ENCODE measurements at regions of chr1 and their contacts with region 1.

Region 1: DNA sequence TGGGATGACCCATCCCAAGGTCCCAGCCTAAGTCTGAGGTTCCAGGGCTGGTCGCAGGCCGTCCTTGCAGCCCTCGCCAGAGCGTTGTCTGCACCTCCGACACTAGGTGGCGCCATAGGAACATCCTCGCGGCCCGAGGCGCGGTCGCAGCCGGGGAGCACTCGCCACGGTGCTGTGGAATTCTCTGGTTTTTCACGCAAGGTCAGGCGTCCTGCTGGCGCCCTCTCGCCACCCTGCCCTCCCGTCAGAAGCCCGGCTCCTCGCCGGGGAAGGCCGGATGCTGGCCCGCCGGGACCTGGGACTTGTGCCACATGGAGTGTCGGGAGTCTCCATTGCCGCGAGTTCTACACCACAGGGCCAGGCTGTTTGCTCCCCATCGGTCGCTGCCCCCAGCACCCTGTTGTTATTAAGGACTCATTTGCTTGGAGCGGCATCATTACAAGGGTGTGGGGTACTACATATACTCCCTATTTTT is 196.8 kb upstream of the LMO4 start:
- DNase-seq: peak; percentile 83 to 88 (median 86)
- ATAC-seq: peak; percentile 98
- H3K4me3 ChIP-seq: peak overlapping the region; percentile 27
- H3K27ac ChIP-seq: no peak overlapping the region
- H3K4me1 ChIP-seq: peaks cover 13 to 14% of the 10 kb centered on the region in 2 experiments
- H3K27me3 ChIP-seq: peaks cover 9 to 40% of the 10 kb centered on the region in 2 experiments; a peak in 3 of 5 replicates
- CTCF ChIP-seq: peak; percentile 86 to 91 (median 88)
- EP300 ChIP-seq: no peak
- POLR2A ChIP-seq: no peak
- RAD21 ChIP-seq: peak; percentile 82 to 90

Region 2: DNA sequence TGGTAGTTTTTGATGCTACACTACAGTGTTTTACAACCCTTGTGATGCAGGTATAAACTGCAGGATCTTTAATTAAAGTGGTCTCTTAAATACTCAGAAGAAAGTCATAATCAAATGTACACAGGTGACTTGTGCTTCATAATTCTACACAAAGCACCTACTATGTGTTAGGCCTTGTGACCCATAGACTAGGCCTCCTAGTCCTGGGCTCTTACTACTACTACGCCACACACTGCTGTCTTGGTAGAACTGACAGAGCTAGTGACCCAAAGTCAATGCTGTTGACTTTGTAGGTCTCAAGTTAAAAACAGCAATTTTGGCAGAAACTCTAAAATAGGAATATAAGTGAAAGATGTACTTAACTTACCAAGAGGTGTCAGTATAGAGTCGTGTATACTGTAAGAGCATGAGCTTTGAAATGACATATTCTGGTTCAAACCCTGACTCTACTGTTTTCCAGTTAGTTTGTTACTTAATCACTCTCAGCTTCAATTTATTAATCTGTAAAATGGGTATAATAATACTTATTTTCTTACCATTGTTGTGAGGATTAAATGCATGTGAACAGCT is 148.2 kb after region 1 on chr1:
- CTCF ChIA-PET with region 1: no interaction called
- POLR2A ChIA-PET with region 1: no interaction called
- in situ Hi-C with region 1: loop called (anchors 10 kb)
- intact Hi-C with region 1: loop called (anchors 5 kb)
- DNase-seq: peak in 1 of 4 experiments; percentile 14
- ATAC-seq: peak; percentile 49; the same call in 2 of the 3 replicates
- H3K4me3 ChIP-seq: no peak overlapping the region
- H3K27ac ChIP-seq: no peak overlapping the region
- H3K4me1 ChIP-seq: peaks cover 0 to 2% of the 10 kb centered on the region in 2 experiments; a peak in 2 of 5 replicates
- H3K27me3 ChIP-seq: peaks cover 0 to 8% of the 10 kb centered on the region in 2 experiments; a peak in 1 of 5 replicates
- CTCF ChIP-seq: peak in 2 of 3 experiments; percentile 31 to 41; a peak in 2 of 6 replicates
- EP300 ChIP-seq: no peak
- POLR2A ChIP-seq: no peak
- RAD21 ChIP-seq: peak in 1 of 2 experiments; percentile 54; a peak in 3 of 4 replicates

Region 3: DNA sequence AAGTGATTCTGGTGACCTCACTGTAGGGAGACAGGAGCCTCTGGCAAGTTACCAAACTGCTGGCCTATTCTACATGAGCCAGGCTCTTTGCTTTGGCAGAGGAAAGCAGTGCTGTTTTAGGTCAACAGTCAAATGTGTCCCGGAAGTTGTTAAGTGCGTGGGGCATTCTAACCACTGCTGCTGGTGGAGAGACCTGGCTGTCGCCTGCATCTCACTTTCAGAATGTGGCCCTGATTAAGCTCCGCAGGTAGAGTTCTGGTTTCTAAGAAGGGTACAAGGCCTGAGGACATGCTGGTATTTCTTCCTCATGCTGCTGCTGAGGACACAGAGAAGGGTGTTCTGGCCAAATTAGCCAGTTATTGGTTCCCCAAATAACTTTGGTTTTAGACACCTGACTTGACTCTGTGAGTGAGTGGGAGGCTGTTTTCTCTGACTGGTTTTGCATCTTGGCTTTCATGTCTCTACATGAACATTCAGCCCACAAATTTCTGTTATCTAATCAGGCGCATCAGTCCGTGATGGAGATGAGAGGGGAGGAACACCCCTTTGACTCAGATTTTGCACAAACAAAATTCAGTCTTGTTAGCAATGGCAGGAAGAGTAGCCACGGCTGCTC is 317.6 kb after region 1 on chr1:
- CTCF ChIA-PET with region 1: no interaction called
- POLR2A ChIA-PET with region 1: no interaction called
- in situ Hi-C with region 1: no loop called
- intact Hi-C with region 1: loop called (anchors 5 kb)
- DNase-seq: no peak
- ATAC-seq: peak; percentile 36; the same call in 2 of the 3 replicates
- H3K4me3 ChIP-seq: no peak overlapping the region
- H3K27ac ChIP-seq: no peak overlapping the region
- H3K4me1 ChIP-seq: no peaks in the 10 kb centered on the region; a peak in 1 of 5 replicates
- H3K27me3 ChIP-seq: peaks cover 0 to 4% of the 10 kb centered on the region in 2 experiments; a peak in 1 of 5 replicates
- CTCF ChIP-seq: no peak
- EP300 ChIP-seq: no peak
- POLR2A ChIP-seq: no peak
- RAD21 ChIP-seq: no peak

Region 4: DNA sequence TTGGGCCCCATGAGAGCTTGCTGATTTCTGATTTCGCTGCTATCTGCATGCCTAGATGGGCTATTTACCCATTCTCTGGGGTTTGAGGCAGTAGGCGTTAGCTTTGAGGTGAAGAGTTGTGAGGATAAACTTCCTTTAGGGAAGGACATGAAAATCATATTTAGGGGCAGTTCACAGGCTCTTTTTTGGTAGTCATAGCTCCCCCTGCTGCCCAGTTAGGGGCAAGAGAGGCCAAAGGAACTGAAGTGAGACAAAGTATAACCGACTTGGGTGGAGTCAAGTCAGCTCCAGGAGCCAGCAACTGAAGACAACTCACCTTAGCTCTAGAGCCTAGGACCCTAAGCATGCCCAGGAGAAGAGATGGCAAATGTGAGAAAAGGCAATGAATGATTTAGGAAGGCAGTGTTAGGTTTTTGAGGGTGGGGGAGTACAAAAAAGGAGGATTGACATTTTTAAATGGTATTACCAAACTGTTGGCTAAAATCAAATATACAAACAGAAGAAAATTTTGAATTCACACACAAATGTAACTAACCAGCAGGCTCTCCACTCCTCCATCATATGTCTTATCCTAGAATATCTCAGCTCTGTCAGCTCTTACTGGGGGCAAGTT is 822.0 kb after region 1 on chr1:
- CTCF ChIA-PET with region 1: no interaction called
- POLR2A ChIA-PET with region 1: no interaction called
- in situ Hi-C with region 1: no loop called
- intact Hi-C with region 1: loop called (anchors 5 kb)
- DNase-seq: peak; percentile 21 to 61 (median 28)
- ATAC-seq: peak; percentile 88
- H3K4me3 ChIP-seq: no peak overlapping the region
- H3K27ac ChIP-seq: no peak overlapping the region
- H3K4me1 ChIP-seq: no peaks in the 10 kb centered on the region
- H3K27me3 ChIP-seq: no peaks in the 10 kb centered on the region
- CTCF ChIP-seq: peak; percentile 49 to 71 (median 64)
- EP300 ChIP-seq: no peak
- POLR2A ChIP-seq: no peak
- RAD21 ChIP-seq: peak; percentile 72 to 73

Measured in K562 (cell line).